ENCODE measurements at regions of chr6 and their contacts with region 1.

Region 1: GRCh38 chr6:797479-798077 is 104.6 kb upstream of the EXOC2 start:
- DNase-seq: peak; percentile 21
- H3K4me3 ChIP-seq: no peak overlapping the region
- H3K27ac ChIP-seq: no peak overlapping the region
- H3K27me3 ChIP-seq: peaks cover 21% of the 10 kb centered on the region
- CTCF ChIP-seq: peak; percentile 80

Region 2: GRCh38 chr6:1024587-1024986 is 227.0 kb after region 1 on chr6:
- CTCF ChIA-PET with region 1: no interaction called
- POLR2A ChIA-PET with region 1: no interaction called
- DNase-seq: peak; percentile 67
- H3K4me3 ChIP-seq: no peak overlapping the region
- H3K27ac ChIP-seq: peak overlapping the region; percentile 31
- H3K27me3 ChIP-seq: no peaks in the 10 kb centered on the region
- CTCF ChIP-seq: no peak

Region 3: GRCh38 chr6:1387876-1388629 is 590.5 kb after region 1 on chr6:
- CTCF ChIA-PET with region 1: interaction called, 16 read pairs
- POLR2A ChIA-PET with region 1: no interaction called
- DNase-seq: no peak
- H3K4me3 ChIP-seq: peak overlapping the region; percentile 76
- H3K27ac ChIP-seq: no peak overlapping the region
- H3K27me3 ChIP-seq: peaks cover 3% of the 10 kb centered on the region
- CTCF ChIP-seq: peak; percentile 19; the same call in 1 of the 2 replicates

Region 4: GRCh38 chr6:1436334-1437306 is 639.0 kb after region 1 on chr6:
- CTCF ChIA-PET with region 1: interaction called, 39 read pairs
- POLR2A ChIA-PET with region 1: no interaction called
- DNase-seq: peak; percentile 36
- H3K4me3 ChIP-seq: no peak overlapping the region
- H3K27ac ChIP-seq: no peak overlapping the region
- H3K27me3 ChIP-seq: peaks cover 11% of the 10 kb centered on the region
- CTCF ChIP-seq: peak; percentile 78